ENCODE measurements at regions of chr16 and their contacts with region 1.

Region 1: GRCh38 chr16:25066747-25067631 is 44.6 kb upstream of the LCMT1 start:
- DNase-seq: peak; percentile 95
- H3K4me3 ChIP-seq: peak overlapping the region; percentile 77 to 91 (median 86)
- H3K27ac ChIP-seq: peak overlapping the region; percentile 91 to 97 (median 94)
- H3K4me1 ChIP-seq: peaks cover 14 to 16% (median 15%) of the 10 kb centered on the region in 4 donors
- H3K27me3 ChIP-seq: no peaks in the 10 kb centered on the region
- CTCF ChIP-seq: no peak
- EP300 ChIP-seq: no peak
- POLR2A ChIP-seq: peak; percentile 33

Region 2: GRCh38 chr16:25020112-25020631 is 46.8 kb before region 1 on chr16:
- intact Hi-C with region 1: no loop called
- DNase-seq: no peak
- H3K4me3 ChIP-seq: no peak overlapping the region
- H3K27ac ChIP-seq: no peak overlapping the region
- H3K4me1 ChIP-seq: peaks cover 0 to 9% (median 8%) of the 10 kb centered on the region in 4 donors
- H3K27me3 ChIP-seq: no peaks in the 10 kb centered on the region
- CTCF ChIP-seq: no peak
- EP300 ChIP-seq: no peak
- POLR2A ChIP-seq: no peak

Region 3: DNA sequence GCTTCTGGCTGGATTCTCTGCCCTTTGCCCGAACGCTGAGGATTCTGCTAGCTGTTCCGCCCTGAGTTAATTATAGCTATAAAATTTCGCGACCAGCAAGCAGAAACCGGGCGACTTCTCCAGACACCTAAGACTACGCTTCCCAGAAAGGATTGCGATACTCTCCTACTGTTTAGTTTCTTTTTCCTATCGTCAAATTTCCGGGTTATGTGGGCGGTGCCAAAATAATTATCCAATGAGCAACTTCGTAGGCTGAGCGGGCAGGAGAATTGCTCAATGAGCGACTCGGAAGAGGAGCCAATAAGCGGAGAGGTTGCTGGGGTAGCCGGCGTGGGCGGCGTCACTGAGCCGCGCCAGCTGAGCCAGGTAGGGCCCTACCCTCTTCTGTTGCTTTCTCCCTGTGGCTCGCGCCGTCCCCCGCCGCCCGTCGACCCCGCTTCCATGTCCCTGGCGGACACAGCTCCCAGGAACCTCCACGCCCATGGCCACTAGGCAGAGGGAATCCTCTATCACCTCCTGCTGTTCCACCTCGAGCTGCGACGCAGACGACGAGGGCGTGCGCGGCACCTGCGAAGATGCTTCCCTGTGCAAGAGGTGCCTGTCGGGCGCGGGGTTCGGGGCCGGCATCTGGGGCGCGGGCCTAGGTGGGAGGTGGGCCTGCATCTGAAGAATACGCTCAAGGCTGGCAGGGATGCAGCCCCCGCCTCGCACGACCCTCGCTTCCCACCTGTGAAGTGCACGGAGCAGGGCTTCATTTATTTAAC is 44.6 kb after region 1 on chr16 and contains the start of gene LCMT1:
- intact Hi-C with region 1: loop called (anchors 5 kb)
- DNase-seq: peak; percentile 98
- H3K4me3 ChIP-seq: peak within 1 kb of the TSS; percentile 83 to 97 (median 91)
- H3K27ac ChIP-seq: peak within 1 kb of the TSS; percentile 84 to 85 (median 84)
- H3K4me1 ChIP-seq: peaks cover 33 to 62% (median 48%) of the 10 kb centered on the region in 4 donors
- H3K27me3 ChIP-seq: no peaks in the 10 kb centered on the region
- CTCF ChIP-seq: no peak
- EP300 ChIP-seq: no peak
- POLR2A ChIP-seq: no peak
- total RNA-seq, gene LCMT1: 10.8 to 24.5 (median 18.0) TPM

Region 4: GRCh38 chr16:25257504-25257955 is 190.5 kb after region 1 on chr16 and contains the start of gene ZKSCAN2:
- intact Hi-C with region 1: loop called (anchors 5 kb)
- DNase-seq: peak; percentile 95
- H3K4me3 ChIP-seq: peak within 1 kb of the TSS; percentile 73 to 98 (median 82)
- H3K27ac ChIP-seq: peak within 1 kb of the TSS; percentile 94 to 99 (median 98)
- H3K4me1 ChIP-seq: peaks cover 33 to 42% (median 38%) of the 10 kb centered on the region in 4 donors
- H3K27me3 ChIP-seq: no peaks in the 10 kb centered on the region
- CTCF ChIP-seq: no peak
- EP300 ChIP-seq: no peak
- POLR2A ChIP-seq: peak; percentile 88
- total RNA-seq, gene ZKSCAN2: 3.7 to 5.3 (median 4.5) TPM

Region 5: GRCh38 chr16:25289466-25289865 is 222.5 kb after region 1 on chr16:
- intact Hi-C with region 1: no loop called
- DNase-seq: no peak
- H3K4me3 ChIP-seq: no peak overlapping the region
- H3K27ac ChIP-seq: no peak overlapping the region
- H3K4me1 ChIP-seq: no peaks in the 10 kb centered on the region
- H3K27me3 ChIP-seq: no peaks in the 10 kb centered on the region
- CTCF ChIP-seq: no peak
- EP300 ChIP-seq: no peak
- POLR2A ChIP-seq: no peak

Region 6: DNA sequence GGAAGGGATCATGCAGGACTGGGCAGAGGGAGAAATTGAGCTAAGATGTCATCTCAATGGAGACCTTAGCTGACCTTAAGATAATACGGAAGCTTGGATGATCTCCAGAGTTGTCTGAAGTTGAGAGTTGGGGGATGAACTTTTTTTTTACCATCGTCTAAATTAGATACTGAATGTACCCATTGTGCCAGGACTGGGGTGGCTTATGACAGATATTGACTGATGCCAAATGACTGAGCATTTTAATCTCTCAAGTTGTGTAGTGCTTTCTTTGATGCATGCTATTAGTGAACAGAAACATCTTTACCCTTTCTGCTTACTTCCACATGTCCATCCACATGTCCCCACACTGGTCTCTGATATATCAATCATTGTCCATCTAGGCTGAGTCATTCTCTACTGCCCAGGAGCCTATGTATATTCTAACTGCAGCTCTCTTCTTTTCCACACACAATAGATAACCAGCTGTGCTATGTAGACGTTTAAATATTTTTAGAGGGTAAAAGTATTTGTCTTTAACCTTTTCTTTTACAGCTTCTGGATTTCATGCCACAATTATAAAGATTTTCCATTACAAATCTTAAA is 250.8 kb after region 1 on chr16:
- intact Hi-C with region 1: no loop called
- DNase-seq: no peak
- H3K4me3 ChIP-seq: no peak overlapping the region
- H3K27ac ChIP-seq: no peak overlapping the region
- H3K4me1 ChIP-seq: no peaks in the 10 kb centered on the region
- H3K27me3 ChIP-seq: no peaks in the 10 kb centered on the region
- CTCF ChIP-seq: no peak
- EP300 ChIP-seq: no peak
- POLR2A ChIP-seq: no peak

Region 7: DNA sequence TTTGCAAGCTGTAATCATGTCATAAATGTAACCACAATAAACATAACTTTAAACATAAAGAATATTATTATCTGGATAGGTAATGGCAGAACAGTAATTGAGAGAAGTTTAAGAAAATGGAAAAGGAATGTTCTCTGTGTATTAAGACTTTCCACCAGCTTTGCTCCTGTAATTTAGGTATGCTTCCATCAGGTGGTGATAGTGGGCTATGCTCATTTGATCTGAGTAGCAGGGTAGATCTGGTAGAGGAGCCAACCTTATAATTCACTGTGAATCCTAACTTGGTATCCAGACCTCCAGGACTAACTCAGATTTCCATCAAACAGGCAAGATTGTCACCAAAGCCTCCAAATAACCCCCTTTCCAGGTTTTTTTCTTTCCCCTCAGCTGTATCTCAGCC is 328.5 kb after region 1 on chr16:
- intact Hi-C with region 1: no loop called
- DNase-seq: no peak
- H3K4me3 ChIP-seq: no peak overlapping the region
- H3K27ac ChIP-seq: no peak overlapping the region
- H3K4me1 ChIP-seq: no peaks in the 10 kb centered on the region
- H3K27me3 ChIP-seq: no peaks in the 10 kb centered on the region
- CTCF ChIP-seq: no peak
- EP300 ChIP-seq: no peak
- POLR2A ChIP-seq: no peak

Measured in esophagus muscularis mucosa (tissue), 4 donors.